ENCODE measurements at regions of chr18 and their contacts with region 1.

Region 1: GRCh38 chr18:50266248-50266704 is at the start of gene CFAP53:
- DNase-seq: peak; percentile 84 to 85
- ATAC-seq: peak; percentile 94 to 96
- H3K4me3 ChIP-seq: peak within 1 kb of the TSS; percentile 94
- H3K27ac ChIP-seq: peak within 1 kb of the TSS; percentile 78 to 87
- H3K4me1 ChIP-seq: peaks cover 8% of the 10 kb centered on the region; the same call in 1 of the 3 replicates
- CTCF ChIP-seq: no peak
- EP300 ChIP-seq: no peak
- POLR2A ChIP-seq: peak; percentile 39; the same call in 1 of the 2 replicates
- RAD21 ChIP-seq: no peak
- polyA plus RNA-seq, gene CFAP53: 0.38 and 0.66 TPM in 2 replicates

Region 2: DNA sequence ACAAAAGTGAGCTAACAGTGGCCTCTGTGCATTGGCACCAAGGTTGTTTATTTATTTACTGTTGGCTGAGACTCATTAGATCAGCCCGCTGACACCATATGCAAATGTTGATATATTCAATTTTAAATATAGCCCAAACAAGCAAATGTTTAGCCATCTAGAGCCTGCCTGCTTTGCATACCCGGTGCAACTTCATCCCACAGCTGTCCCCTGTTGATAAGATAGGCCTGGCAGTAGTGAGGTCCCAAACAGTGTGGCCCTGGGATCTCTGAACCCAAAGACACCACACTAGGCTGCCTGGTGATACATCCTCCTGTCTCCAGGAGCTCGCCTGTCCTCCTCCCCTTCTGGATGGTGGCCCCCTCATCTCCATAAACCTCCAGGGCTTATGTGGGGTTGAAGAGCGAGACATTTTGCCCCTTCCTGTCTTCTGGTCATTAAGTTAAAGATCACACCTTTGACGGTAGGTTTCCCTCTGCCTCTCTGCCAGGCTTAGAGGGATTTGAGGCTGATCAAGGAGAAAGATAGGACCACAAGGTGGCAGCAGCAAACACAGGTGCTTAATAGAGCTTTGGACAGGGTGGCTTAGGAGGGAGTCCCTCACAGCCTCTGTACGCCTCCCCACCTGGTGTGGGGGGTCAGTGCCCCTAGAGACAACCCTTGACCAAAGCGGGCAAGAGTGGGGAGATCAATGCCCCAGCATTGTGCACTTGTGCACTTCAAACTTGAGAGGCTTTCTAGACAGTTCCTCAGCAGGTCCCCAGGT is 47.7 kb before region 1 on chr18:
- CTCF ChIA-PET with region 1: interaction called, 16 read pairs
- POLR2A ChIA-PET with region 1: no interaction called
- DNase-seq: peak in 1 of 2 experiments; percentile 40
- ATAC-seq: peak; percentile 81 to 87; a peak in 5 of 6 replicates
- H3K4me3 ChIP-seq: no peak overlapping the region
- H3K27ac ChIP-seq: no peak overlapping the region
- H3K4me1 ChIP-seq: no peaks in the 10 kb centered on the region
- CTCF ChIP-seq: peak; percentile 50
- EP300 ChIP-seq: no peak
- POLR2A ChIP-seq: no peak
- RAD21 ChIP-seq: peak; percentile 43 to 44; a peak in 4 of 5 replicates

Region 3: GRCh38 chr18:50281295-50281971 is 15.2 kb after region 1 on chr18 and contains the start of gene MBD1:
- CTCF ChIA-PET with region 1: interaction called, 5 read pairs
- POLR2A ChIA-PET with region 1: interaction called, 14 read pairs
- DNase-seq: peak; percentile 84 to 96
- ATAC-seq: peak; percentile 93 to 96
- H3K4me3 ChIP-seq: peak within 1 kb of the TSS; percentile 87
- H3K27ac ChIP-seq: peak within 1 kb of the TSS; percentile 92 to 95
- H3K4me1 ChIP-seq: peaks cover 30% of the 10 kb centered on the region
- CTCF ChIP-seq: no peak
- EP300 ChIP-seq: no peak
- POLR2A ChIP-seq: peak; percentile 87
- RAD21 ChIP-seq: no peak
- polyA plus RNA-seq, gene MBD1: 27.9 and 28.6 TPM in 2 replicates

Region 4: DNA sequence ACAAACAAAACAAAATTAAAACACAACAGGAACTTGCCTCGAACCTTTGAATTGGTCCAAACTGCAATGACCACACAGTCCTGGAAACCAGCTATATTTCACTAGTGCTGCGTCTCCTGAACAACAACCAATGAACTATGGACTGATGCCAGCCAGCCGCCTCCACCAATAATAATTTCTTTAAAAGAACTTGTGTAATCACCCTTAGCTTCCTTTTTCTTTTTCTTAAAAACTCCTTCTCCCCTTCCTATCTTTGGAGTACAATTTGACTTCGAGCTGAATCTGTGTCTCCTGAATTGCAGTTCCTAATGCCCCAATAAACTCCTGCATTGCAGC is 22.8 kb after region 1 on chr18:
- CTCF ChIA-PET with region 1: interaction called, 11 read pairs
- POLR2A ChIA-PET with region 1: no interaction called
- DNase-seq: no peak
- ATAC-seq: no peak
- H3K4me3 ChIP-seq: no peak overlapping the region
- H3K27ac ChIP-seq: no peak overlapping the region
- H3K4me1 ChIP-seq: peaks cover 5% of the 10 kb centered on the region; the same call in 1 of the 3 replicates
- CTCF ChIP-seq: no peak
- EP300 ChIP-seq: no peak
- POLR2A ChIP-seq: no peak
- RAD21 ChIP-seq: no peak

Region 5: DNA sequence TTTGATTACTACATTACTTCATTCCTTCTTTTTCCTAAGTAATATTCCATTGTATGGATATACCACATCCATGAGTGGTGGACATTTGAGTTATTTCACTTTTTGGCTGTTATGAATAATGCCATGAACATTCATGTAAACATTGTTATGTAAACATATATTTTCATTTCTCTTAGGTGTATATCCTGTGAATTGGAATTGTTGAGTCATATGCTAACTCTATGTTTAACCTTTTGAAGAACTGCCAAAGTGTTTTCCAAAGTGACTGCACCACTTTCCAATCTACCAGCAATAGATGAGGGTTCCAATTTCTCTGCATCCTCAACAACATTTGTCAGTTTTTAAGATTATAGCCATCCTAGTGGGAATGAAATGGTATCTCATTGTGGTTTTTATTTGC is 63.9 kb after region 1 on chr18:
- CTCF ChIA-PET with region 1: no interaction called
- POLR2A ChIA-PET with region 1: no interaction called
- DNase-seq: no peak
- ATAC-seq: no peak
- H3K4me3 ChIP-seq: no peak overlapping the region
- H3K27ac ChIP-seq: no peak overlapping the region
- H3K4me1 ChIP-seq: no peaks in the 10 kb centered on the region
- CTCF ChIP-seq: no peak
- EP300 ChIP-seq: no peak
- POLR2A ChIP-seq: no peak
- RAD21 ChIP-seq: no peak

Region 6: DNA sequence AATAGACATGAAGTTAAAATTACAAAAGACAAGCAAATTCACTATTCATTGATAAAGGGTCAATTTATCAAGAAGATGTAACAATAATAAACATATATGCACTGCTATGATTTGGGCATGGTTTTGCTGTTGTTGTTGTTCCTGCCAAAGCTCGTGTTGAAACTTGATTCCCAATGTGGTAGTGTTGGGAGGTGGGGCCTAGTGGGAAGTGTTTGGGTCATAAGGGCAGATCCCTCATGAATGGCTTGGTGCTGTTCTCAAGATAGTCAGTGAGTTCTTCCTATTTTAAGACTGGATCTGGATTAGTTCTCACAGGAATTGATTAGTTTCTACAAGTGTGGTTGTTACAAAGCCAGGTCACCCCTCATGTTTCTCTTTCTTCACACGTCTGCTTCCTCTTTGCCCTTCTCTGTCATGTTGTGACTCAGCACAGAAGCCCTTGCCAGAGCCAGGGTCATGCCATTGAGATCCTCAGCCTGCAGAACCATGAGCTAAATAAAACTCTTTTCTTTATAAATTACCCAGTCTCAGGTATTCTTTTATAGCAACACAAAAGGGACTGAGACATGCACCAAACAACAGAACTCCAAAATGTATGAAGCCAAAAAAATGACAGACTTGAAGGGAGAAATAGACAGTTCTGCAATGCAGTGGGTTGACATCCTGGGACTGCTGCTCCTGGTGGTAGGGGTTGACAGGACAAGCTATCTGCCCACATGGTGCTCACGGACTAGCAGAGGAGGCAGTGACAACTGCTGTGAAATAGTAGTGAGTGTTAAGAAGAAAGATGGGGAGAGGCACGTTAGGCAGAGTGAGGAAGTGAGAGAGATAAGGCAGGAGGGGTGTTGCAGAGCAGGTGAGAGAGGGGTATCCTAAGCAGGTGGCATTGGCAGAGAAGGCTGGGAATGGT is 90.0 kb after region 1 on chr18:
- CTCF ChIA-PET with region 1: interaction called, 14 read pairs
- POLR2A ChIA-PET with region 1: no interaction called
- DNase-seq: no peak
- ATAC-seq: peak; percentile 66 to 73; a peak in 5 of 6 replicates
- H3K4me3 ChIP-seq: no peak overlapping the region
- H3K27ac ChIP-seq: no peak overlapping the region
- H3K4me1 ChIP-seq: no peaks in the 10 kb centered on the region
- CTCF ChIP-seq: no peak
- EP300 ChIP-seq: no peak
- POLR2A ChIP-seq: no peak
- RAD21 ChIP-seq: no peak

Region 7: GRCh38 chr18:50422286-50422898 is 156.1 kb after region 1 on chr18:
- CTCF ChIA-PET with region 1: no interaction called
- POLR2A ChIA-PET with region 1: no interaction called
- DNase-seq: no peak
- ATAC-seq: no peak
- H3K4me3 ChIP-seq: no peak overlapping the region
- H3K27ac ChIP-seq: no peak overlapping the region
- H3K4me1 ChIP-seq: no peaks in the 10 kb centered on the region
- CTCF ChIP-seq: no peak
- EP300 ChIP-seq: no peak
- POLR2A ChIP-seq: no peak
- RAD21 ChIP-seq: no peak

Measured in A549 (cell line).